ENCODE measurements at regions of chr16 and their contacts with region 1.

Region 1: GRCh38 chr16:82263521-82264143 is 93.6 kb upstream of the MPHOSPH6 start:
- DNase-seq: peak; percentile 55
- H3K4me3 ChIP-seq: no peak overlapping the region
- H3K27ac ChIP-seq: no peak overlapping the region
- H3K4me1 ChIP-seq: no peaks in the 10 kb centered on the region
- H3K27me3 ChIP-seq: peaks cover 4 to 13% of the 10 kb centered on the region in 2 experiments
- CTCF ChIP-seq: peak; percentile 84 to 85
- POLR2A ChIP-seq: no peak

Region 2: DNA sequence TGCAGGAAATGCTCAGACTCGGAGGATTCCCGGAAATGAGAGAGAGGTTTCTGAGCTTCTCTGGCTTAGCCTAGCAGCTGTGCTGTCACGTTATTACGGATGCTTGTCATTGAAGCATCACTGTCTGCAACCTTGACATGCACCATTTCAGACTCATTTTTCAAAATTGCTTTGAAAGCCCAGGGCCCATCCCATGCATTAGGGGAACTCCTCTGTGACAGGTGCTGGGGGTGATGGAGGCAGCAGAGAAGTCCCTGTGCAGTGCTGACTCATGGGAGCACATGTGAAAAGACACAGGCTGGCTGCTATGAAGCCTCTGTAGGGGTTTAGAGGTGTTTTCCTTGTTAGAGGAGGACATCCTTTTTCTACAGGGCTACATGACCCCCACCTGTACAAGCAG is 120.4 kb after region 1 on chr16:
- CTCF ChIA-PET with region 1: no interaction called
- POLR2A ChIA-PET with region 1: no interaction called
- dilution Hi-C with region 1: no loop called
- intact Hi-C with region 1: no loop called
- DNase-seq: no peak
- H3K4me3 ChIP-seq: no peak overlapping the region
- H3K27ac ChIP-seq: no peak overlapping the region
- H3K4me1 ChIP-seq: no peaks in the 10 kb centered on the region
- H3K27me3 ChIP-seq: no peaks in the 10 kb centered on the region
- CTCF ChIP-seq: no peak
- POLR2A ChIP-seq: no peak

Region 3: GRCh38 chr16:82456683-82457082 is 193.1 kb after region 1 on chr16:
- CTCF ChIA-PET with region 1: interaction called, 30 read pairs
- POLR2A ChIA-PET with region 1: no interaction called
- dilution Hi-C with region 1: no loop called
- intact Hi-C with region 1: loop called (anchors 2 kb)
- DNase-seq: peak; percentile 62
- H3K4me3 ChIP-seq: no peak overlapping the region
- H3K27ac ChIP-seq: no peak overlapping the region
- H3K4me1 ChIP-seq: no peaks in the 10 kb centered on the region
- H3K27me3 ChIP-seq: peaks cover 0 to 8% of the 10 kb centered on the region in 2 experiments
- CTCF ChIP-seq: peak; percentile 80 to 89
- POLR2A ChIP-seq: no peak

Region 4: GRCh38 chr16:83356266-83356665 is 1092.6 kb after region 1 on chr16:
- CTCF ChIA-PET with region 1: interaction called, 9 read pairs
- POLR2A ChIA-PET with region 1: no interaction called
- dilution Hi-C with region 1: no loop called
- intact Hi-C with region 1: loop called (anchors 1 kb)
- DNase-seq: peak; percentile 70
- H3K4me3 ChIP-seq: no peak overlapping the region
- H3K27ac ChIP-seq: no peak overlapping the region
- H3K4me1 ChIP-seq: no peaks in the 10 kb centered on the region
- H3K27me3 ChIP-seq: no peaks in the 10 kb centered on the region
- CTCF ChIP-seq: peak; percentile 72 to 74
- POLR2A ChIP-seq: no peak

Region 5: GRCh38 chr16:83449861-83450260 is 1186.2 kb after region 1 on chr16:
- CTCF ChIA-PET with region 1: interaction called, 45 read pairs
- POLR2A ChIA-PET with region 1: no interaction called
- dilution Hi-C with region 1: no loop called
- intact Hi-C with region 1: loop called (anchors 1 kb)
- DNase-seq: no peak
- H3K4me3 ChIP-seq: no peak overlapping the region
- H3K27ac ChIP-seq: no peak overlapping the region
- H3K4me1 ChIP-seq: no peaks in the 10 kb centered on the region
- H3K27me3 ChIP-seq: no peaks in the 10 kb centered on the region
- CTCF ChIP-seq: no peak
- POLR2A ChIP-seq: no peak

Region 6: DNA sequence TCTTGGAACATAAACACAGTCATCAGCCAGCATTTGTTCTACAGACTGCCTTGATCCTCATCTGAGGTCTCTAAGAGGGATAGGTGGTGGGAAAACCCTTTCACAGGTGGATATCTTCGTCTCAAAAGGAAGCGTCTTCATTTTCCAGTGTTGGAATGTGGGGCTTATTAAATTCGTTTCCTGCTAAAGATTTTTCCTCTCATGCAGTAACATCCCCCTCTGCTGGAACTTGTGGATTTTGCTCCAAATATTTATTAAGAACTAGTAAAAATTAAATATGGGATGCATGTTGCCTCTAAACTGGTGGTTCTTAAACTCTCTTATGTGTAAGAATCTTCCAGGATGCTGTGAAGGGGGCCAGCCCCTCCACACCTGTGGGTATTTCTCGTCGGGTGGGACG is 1615.2 kb after region 1 on chr16:
- CTCF ChIA-PET with region 1: no interaction called
- POLR2A ChIA-PET with region 1: no interaction called
- dilution Hi-C with region 1: no loop called
- intact Hi-C with region 1: loop called (anchors 5 kb)
- DNase-seq: peak; percentile 70
- H3K4me3 ChIP-seq: no peak overlapping the region
- H3K27ac ChIP-seq: no peak overlapping the region
- H3K4me1 ChIP-seq: no peaks in the 10 kb centered on the region
- H3K27me3 ChIP-seq: peaks cover 13 to 20% of the 10 kb centered on the region in 2 experiments
- CTCF ChIP-seq: peak; percentile 22 to 38
- POLR2A ChIP-seq: no peak